Caco-2 (cell line): ENCODE measurements at regions of chr18 and their contacts with region 1.

Region 1: DNA sequence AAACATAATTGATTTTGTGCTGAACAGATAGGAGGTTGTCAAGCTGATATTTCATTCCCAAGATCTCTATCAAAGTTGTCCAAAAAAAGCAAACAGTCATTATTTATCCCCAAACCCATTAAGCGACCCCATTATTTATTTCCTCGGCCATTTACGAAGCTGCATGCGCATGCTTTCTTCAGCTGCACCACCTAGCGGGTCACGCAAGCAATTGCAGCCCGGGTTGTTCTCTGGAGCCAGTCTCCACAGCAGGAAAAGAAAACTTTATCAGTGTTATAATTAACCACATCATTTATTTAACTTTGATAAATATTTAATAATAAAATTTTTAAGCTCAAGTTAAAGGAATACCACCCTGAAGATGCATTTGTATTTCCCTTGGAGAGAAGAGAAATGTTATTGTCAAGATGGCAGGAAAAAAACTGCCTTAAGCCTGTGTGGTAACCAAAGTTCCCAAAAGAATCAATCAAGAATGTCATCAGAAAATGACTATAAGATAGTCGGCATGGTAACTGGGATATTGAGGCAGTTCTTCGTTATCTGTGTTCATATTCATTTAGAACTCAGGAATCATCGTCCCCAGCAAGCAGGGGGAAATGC is 304.7 kb downstream of the FBXO15 start:
- DNase-seq: peak in 1 of 2 experiments; percentile 40
- H3K4me3 ChIP-seq: no peak overlapping the region
- H3K4me3 Mint-ChIP-seq: no peak overlapping the region
- H3K27ac Mint-ChIP-seq: no peak overlapping the region
- H3K4me1 ChIP-seq: no peaks in the 10 kb centered on the region
- H3K4me1 Mint-ChIP-seq: no peaks in the 10 kb centered on the region
- H3K27me3 ChIP-seq: no peaks in the 10 kb centered on the region
- H3K27me3 Mint-ChIP-seq: no peaks in the 10 kb centered on the region
- CTCF ChIP-seq: peak; percentile 52 to 80

Region 2: DNA sequence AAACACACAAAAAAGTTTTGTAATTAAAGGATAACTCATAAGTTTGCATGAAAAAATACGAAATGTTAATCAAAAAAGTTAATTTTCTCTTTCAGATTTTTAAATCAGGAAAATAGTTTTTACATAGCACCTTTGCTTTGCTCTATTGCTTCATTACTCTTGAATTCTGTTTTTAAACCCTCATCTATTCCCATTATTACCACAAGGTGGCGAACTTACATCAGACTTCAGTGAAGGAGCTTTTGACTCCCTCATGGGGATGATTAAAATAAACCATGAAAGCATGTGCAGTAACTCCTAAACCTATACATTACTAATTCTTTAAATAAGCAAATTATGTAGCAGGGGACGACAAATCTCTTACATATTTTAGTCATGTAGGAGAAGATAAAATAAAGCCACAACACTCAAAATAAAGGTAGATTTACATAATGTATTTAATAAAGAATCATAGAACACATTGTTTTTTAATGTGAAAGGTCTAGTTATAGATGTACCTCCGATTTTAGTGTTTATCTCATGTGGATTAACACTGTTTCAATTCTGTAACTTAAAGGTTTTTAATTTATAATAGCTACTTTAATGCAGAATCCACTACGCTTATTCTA is 1080.3 kb before region 1 on chr18:
- CTCF ChIA-PET with region 1: no interaction called
- POLR2A ChIA-PET with region 1: no interaction called
- intact Hi-C with region 1: loop called (anchors 5 kb)
- DNase-seq: peak in 1 of 2 experiments; percentile 38
- H3K4me3 ChIP-seq: no peak overlapping the region
- H3K4me3 Mint-ChIP-seq: no peak overlapping the region
- H3K27ac Mint-ChIP-seq: no peak overlapping the region
- H3K4me1 ChIP-seq: no peaks in the 10 kb centered on the region
- H3K4me1 Mint-ChIP-seq: no peaks in the 10 kb centered on the region
- H3K27me3 ChIP-seq: no peaks in the 10 kb centered on the region
- H3K27me3 Mint-ChIP-seq: peaks cover 2% of the 10 kb centered on the region
- CTCF ChIP-seq: peak; percentile 43 to 47

Region 3: GRCh38 chr18:73879766-73880165 is 36.9 kb after region 1 on chr18:
- CTCF ChIA-PET with region 1: no interaction called
- POLR2A ChIA-PET with region 1: no interaction called
- intact Hi-C with region 1: no loop called
- DNase-seq: no peak
- H3K4me3 ChIP-seq: no peak overlapping the region
- H3K4me3 Mint-ChIP-seq: no peak overlapping the region
- H3K27ac Mint-ChIP-seq: no peak overlapping the region
- H3K4me1 ChIP-seq: no peaks in the 10 kb centered on the region; the same call in 1 of the 2 replicates
- H3K4me1 Mint-ChIP-seq: peaks cover 6% of the 10 kb centered on the region
- H3K27me3 ChIP-seq: no peaks in the 10 kb centered on the region
- H3K27me3 Mint-ChIP-seq: peaks cover 3% of the 10 kb centered on the region
- CTCF ChIP-seq: no peak

Region 4: GRCh38 chr18:74139888-74140287 is 297.0 kb after region 1 on chr18:
- CTCF ChIA-PET with region 1: no interaction called
- POLR2A ChIA-PET with region 1: no interaction called
- intact Hi-C with region 1: no loop called
- DNase-seq: no peak
- H3K4me3 ChIP-seq: no peak overlapping the region
- H3K4me3 Mint-ChIP-seq: no peak overlapping the region
- H3K27ac Mint-ChIP-seq: no peak overlapping the region
- H3K4me1 ChIP-seq: no peaks in the 10 kb centered on the region
- H3K4me1 Mint-ChIP-seq: no peaks in the 10 kb centered on the region
- H3K27me3 ChIP-seq: no peaks in the 10 kb centered on the region
- H3K27me3 Mint-ChIP-seq: peaks cover 19% of the 10 kb centered on the region
- CTCF ChIP-seq: no peak